Aorta (tissue), 5 donors: ENCODE measurements at regions of chr11 and their contacts with region 1.

Region 1: GRCh38 chr11:65314501-65315203 is at the start of gene CDC42EP2:
- DNase-seq: peak; percentile 88 to 96
- ATAC-seq: peak; percentile 96
- H3K4me3 ChIP-seq: peak within 1 kb of the TSS; percentile 74 to 82
- H3K27ac ChIP-seq: peak within 1 kb of the TSS in 1 of 2 donors; percentile 52
- H3K4me1 ChIP-seq: peaks cover 0 to 2% of the 10 kb centered on the region in 2 donors
- H3K27me3 ChIP-seq: no peaks in the 10 kb centered on the region
- total RNA-seq, gene CDC42EP2: 16.2 to 20.9 TPM

Region 2: DNA sequence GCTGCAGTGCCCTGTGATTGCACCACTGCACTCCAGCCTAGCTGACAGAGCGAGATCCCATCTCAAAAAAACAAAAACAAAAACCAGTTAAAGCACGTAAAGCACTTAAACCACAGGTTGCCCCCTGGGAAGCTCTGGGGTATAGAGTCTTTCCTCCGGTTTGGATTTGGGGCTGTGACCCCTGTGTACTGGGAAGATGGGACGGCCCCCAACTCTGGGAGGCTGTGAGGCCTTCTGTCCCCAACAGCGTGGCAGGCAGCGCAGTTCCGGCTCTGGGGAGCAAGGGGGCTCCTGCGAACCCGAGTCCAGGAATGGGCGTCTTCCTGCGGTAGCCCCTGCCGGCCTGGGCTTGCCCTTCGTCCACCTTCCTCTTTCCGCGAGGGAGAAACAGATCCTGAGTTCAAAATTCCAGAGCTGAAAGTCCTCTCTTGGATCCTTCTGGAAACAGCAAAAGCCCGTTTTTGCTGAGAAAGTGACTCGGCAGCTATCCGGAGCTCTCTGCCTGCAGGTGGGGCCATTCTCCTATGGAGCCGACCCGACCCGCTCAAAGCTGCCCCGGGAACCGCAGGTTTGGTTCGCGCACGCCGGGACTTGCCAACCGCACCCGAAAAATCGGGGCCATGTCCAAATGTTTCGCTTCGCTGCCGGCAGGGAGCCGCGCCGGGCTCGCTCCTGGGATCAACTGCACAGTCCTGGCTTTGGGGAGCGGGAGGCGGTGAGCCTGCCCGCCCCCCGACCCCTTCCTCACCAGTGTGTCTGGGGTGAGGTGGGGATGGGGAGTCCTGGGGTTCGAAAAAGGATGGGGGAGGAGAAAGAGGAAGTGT is 89.2 kb before region 1 on chr11:
- intact Hi-C with region 1: loop called (anchors 1 to 5 kb)
- DNase-seq: peak; percentile 79 to 88
- ATAC-seq: peak; percentile 79
- H3K4me3 ChIP-seq: no peak overlapping the region
- H3K27ac ChIP-seq: no peak overlapping the region
- H3K4me1 ChIP-seq: no peaks in the 10 kb centered on the region
- H3K27me3 ChIP-seq: no peaks in the 10 kb centered on the region

Region 3: DNA sequence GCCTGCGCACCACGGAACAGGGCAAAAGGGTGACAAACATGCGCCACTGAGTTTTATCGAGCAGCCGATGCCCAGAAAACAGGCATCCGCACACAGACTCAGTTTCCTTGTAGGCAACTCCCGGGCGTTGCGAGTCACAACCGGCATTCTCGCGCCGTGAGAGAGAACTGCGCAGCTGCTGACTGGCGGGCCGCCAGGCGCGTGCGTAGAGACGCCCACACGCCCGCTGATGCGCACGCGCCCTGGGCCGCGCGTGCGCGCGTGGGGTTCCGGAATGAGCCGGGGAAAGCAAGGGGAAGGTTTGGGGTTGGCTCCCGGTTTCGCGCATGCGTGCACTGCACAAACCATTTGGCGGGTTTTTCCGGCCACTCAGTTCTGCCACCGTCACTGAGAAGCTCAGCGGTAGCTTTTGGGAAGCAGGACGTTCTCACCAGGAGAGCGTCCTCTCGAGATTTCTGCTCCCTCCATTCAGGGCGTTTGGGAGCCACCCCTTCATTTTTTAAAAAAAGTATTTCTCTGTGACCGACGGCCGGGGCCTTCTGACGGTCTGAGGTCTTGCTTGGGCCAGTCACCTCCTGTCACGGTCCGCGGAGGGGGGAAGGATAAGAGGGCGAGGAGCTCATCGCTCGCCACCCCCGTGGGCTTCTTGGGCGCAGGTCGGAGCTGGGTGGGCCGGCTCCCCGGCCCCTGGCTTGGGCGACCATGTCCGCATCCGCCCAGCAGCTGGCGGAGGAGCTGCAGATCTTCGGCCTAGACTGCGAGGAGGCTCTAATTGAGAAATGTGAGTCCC is 52.9 kb before region 1 on chr11 and contains the start of gene POLA2:
- intact Hi-C with region 1: no loop called
- DNase-seq: peak; percentile 97 to 98
- ATAC-seq: peak; percentile 98
- H3K4me3 ChIP-seq: peak within 1 kb of the TSS; percentile 35 to 54
- H3K27ac ChIP-seq: peak within 1 kb of the TSS in 1 of 2 donors; percentile 93
- H3K4me1 ChIP-seq: peaks cover 2% of the 10 kb centered on the region in 2 donors
- H3K27me3 ChIP-seq: no peaks in the 10 kb centered on the region
- total RNA-seq, gene POLA2: 3.4 to 9.2 TPM

Region 4: DNA sequence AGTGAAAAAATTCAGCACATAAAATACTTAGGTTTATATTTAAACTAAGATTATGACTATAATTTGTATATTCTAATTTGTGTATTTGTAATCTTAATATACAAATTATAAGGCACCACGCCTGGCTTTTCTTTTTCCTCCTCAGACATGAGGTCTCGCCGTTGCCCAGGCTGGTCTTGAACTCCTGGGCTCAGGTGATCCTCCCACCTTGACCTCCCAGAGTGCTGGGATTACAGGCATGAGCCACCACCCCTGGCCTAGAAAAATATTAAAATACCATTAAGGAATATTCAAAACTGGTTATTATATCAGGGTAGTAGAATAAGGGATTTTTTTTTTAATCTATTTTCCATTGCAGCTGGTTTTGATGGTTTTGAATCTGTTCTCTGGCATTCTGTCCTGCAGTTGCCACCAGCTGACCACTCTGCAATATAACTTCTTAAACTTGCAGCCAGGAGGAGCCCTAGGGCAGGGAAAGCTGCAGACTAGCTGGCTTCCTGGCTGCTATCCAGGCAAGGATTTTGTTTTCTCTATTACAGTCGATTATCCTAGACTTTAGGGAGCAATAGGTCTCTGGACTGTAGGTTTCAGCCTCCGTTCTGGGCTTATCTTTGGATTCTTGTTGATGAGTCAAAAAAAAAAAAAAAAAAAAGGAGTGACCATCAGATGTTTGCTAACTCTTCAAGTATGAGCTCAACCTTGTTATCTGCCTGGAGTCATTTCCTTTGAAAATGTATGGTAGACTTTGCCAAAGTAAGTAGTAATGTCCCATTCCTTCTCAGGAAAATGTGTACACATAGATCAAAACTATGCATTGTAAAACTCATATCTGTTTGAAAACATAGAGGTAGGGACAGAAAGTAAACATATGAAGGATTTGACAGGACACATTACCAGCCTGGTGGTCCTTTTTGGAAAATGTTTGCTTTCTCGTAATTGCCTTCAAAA is 39.6 kb before region 1 on chr11:
- intact Hi-C with region 1: loop called (anchors 1 to 2 kb)
- DNase-seq: peak in 1 of 2 donors; percentile 76
- ATAC-seq: peak; percentile 93
- H3K4me3 ChIP-seq: no peak overlapping the region
- H3K27ac ChIP-seq: no peak overlapping the region
- H3K4me1 ChIP-seq: no peaks in the 10 kb centered on the region
- H3K27me3 ChIP-seq: no peaks in the 10 kb centered on the region